ENCODE measurements at regions of chr14 and their contacts with region 1.

Region 1: GRCh38 chr14:104563742-104564615 is 15.6 kb upstream of the C14orf180 start:
- DNase-seq: no peak
- ATAC-seq: peak; percentile 90
- H3K4me3 ChIP-seq: no peak overlapping the region
- H3K27ac ChIP-seq: no peak overlapping the region
- H3K4me1 ChIP-seq: no peaks in the 10 kb centered on the region
- H3K27me3 ChIP-seq: peaks cover 0 to 8% of the 10 kb centered on the region in 2 experiments; a peak in 2 of 4 replicates
- CTCF ChIP-seq: peak; percentile 57 to 82 (median 68)
- EP300 ChIP-seq: no peak
- POLR2A ChIP-seq: no peak
- RAD21 ChIP-seq: peak; percentile 75

Region 2: GRCh38 chr14:104137297-104138097 is 426.5 kb before region 1 on chr14:
- CTCF ChIA-PET with region 1: no interaction called
- POLR2A ChIA-PET with region 1: no interaction called
- RAD21 ChIA-PET with region 1: no interaction called
- SMC1A ChIA-PET with region 1: no interaction called
- in situ Hi-C with region 1: loop called (anchors 5 kb)
- intact Hi-C with region 1: loop called (anchors 2 kb)
- DNase-seq: no peak
- ATAC-seq: peak; percentile 95
- H3K4me3 ChIP-seq: no peak overlapping the region
- H3K27ac ChIP-seq: no peak overlapping the region
- H3K4me1 ChIP-seq: no peaks in the 10 kb centered on the region
- H3K27me3 ChIP-seq: peaks cover 10 to 15% of the 10 kb centered on the region in 2 experiments; a peak in 3 of 4 replicates
- CTCF ChIP-seq: peak; percentile 63 to 75 (median 68)
- EP300 ChIP-seq: no peak
- POLR2A ChIP-seq: no peak
- RAD21 ChIP-seq: peak; percentile 71

Region 3: GRCh38 chr14:104820669-104821228 is 256.8 kb after region 1 on chr14:
- CTCF ChIA-PET with region 1: no interaction called
- POLR2A ChIA-PET with region 1: no interaction called
- RAD21 ChIA-PET with region 1: no interaction called
- SMC1A ChIA-PET with region 1: no interaction called
- in situ Hi-C with region 1: no loop called
- intact Hi-C with region 1: no loop called
- DNase-seq: no peak
- ATAC-seq: no peak
- H3K4me3 ChIP-seq: no peak overlapping the region
- H3K27ac ChIP-seq: no peak overlapping the region
- H3K4me1 ChIP-seq: 0 out of 2 replicates have a peak, but pooled peaks cover under 1% of the 10 kb centered on the region
- H3K27me3 ChIP-seq: no peaks in the 10 kb centered on the region
- CTCF ChIP-seq: no peak
- EP300 ChIP-seq: no peak
- POLR2A ChIP-seq: no peak
- RAD21 ChIP-seq: no peak